Endothelial cell of umbilical vein (primary cell): ENCODE measurements at regions of chr7 and their contacts with region 1.

Region 1: DNA sequence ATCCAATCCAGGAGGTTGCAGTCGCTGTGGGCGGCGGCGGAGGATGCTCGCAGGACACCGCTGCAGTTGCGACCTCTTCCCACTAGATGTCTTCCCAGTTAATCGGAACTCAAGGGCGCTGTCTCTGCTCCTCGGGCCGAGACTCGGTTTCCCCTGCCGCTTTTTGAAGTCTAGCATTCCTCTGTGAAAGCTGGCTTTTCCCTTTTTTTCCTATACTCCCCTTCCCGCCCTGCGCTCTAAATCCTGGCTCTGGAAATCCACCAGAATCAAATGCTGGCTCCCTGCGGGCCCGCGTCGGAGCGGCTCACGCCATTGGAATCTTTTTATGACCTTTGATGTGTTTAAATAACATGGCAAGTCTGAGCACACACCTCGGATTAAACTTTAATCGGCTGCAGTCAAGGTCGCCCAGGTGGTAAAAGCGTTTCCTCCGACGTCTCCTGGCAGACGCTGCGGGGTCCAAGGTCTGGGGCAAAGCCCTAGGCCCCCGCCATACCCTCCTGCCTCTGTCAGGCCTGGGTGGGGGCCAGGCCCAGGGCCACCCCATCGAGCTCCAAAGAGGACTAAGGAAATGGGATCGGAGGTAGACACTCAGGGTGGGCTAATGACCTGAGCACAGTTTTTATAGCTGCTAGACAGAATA is 10.7 kb upstream of the HOXA13 start:
- DNase-seq: no peak
- H3K4me3 ChIP-seq: peak overlapping the region in 1 of 3 experiments; percentile 29
- H3K27ac ChIP-seq: no peak overlapping the region
- H3K4me1 ChIP-seq: peaks cover 15% of the 10 kb centered on the region
- H3K27me3 ChIP-seq: peaks cover 73 to 77% of the 10 kb centered on the region in 2 experiments
- CTCF ChIP-seq: peak; percentile 56 to 82
- POLR2A ChIP-seq: no peak

Region 2: DNA sequence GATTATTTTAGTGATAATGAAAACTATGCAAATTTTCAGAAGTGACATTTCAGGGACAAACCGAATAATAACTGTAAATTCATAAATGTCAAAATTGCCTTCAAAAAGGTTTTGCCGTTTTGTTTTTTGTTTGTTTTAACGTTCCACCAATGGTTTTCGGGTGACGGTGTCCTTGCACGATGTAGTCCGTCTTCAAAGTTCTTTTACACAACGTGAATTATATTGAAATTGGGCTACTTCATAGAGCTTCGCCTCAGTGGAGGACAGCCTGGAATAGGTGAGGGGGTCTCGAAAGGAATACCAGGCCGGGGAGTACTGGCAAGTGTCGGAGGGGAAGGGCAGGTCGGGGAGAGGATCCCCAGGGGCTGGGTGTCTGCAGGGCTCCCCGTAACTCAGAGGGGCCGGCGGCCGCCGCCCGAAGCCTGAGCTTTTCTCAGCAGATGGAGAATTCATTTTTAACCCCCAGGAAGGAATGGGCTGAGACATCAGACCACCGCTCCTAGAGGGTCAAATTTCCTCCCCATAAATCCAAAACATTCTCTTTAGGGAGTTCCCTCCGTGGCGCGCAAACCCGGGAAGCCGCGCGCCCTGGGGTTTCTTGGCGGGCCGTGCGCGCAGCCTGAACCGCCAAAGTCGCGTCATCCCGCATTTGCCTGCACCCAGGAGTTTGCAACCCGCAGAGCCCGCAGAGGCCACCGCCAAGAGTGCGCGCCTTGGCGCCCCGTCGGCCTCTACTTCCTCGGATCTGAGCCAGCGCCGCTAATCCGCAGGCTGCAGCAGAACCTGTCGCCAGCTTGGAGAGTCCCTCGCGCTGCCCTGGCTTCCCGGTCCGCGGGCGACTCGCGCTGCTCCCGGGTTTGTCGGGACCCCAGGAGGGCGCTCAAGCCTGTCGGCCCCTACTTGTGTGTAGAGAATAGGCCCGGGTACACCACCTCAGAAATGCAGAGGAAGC is 14.7 kb after region 1 on chr7:
- CTCF ChIA-PET with region 1: interaction called, 5 read pairs
- POLR2A ChIA-PET with region 1: no interaction called
- dilution Hi-C with region 1: no loop called
- intact Hi-C with region 1: loop called (anchors 2 kb)
- DNase-seq: no peak
- H3K4me3 ChIP-seq: no peak overlapping the region
- H3K27ac ChIP-seq: no peak overlapping the region
- H3K4me1 ChIP-seq: no peaks in the 10 kb centered on the region
- H3K27me3 ChIP-seq: peaks cover 69 to 80% of the 10 kb centered on the region in 2 experiments
- CTCF ChIP-seq: no peak
- POLR2A ChIP-seq: no peak

Region 3: GRCh38 chr7:27576360-27576944 is 365.9 kb after region 1 on chr7:
- CTCF ChIA-PET with region 1: interaction called, 13 read pairs
- POLR2A ChIA-PET with region 1: no interaction called
- dilution Hi-C with region 1: no loop called
- intact Hi-C with region 1: loop called (anchors 1 kb)
- DNase-seq: peak; percentile 70
- H3K4me3 ChIP-seq: no peak overlapping the region
- H3K27ac ChIP-seq: no peak overlapping the region
- H3K4me1 ChIP-seq: no peaks in the 10 kb centered on the region
- H3K27me3 ChIP-seq: no peaks in the 10 kb centered on the region
- CTCF ChIP-seq: peak; percentile 22 to 26
- POLR2A ChIP-seq: no peak

Region 4: GRCh38 chr7:28078036-28078901 is 867.7 kb after region 1 on chr7:
- CTCF ChIA-PET with region 1: interaction called, 3 read pairs
- POLR2A ChIA-PET with region 1: no interaction called
- dilution Hi-C with region 1: no loop called
- intact Hi-C with region 1: loop called (anchors 5 kb)
- DNase-seq: peak; percentile 49
- H3K4me3 ChIP-seq: no peak overlapping the region
- H3K27ac ChIP-seq: no peak overlapping the region
- H3K4me1 ChIP-seq: peaks cover 7% of the 10 kb centered on the region
- H3K27me3 ChIP-seq: no peaks in the 10 kb centered on the region
- CTCF ChIP-seq: peak; percentile 90 to 98
- POLR2A ChIP-seq: no peak